Common myeloid progenitor, CD34-positive (primary cell): ENCODE measurements at regions of chr22 and their contacts with region 1.

Region 1: DNA sequence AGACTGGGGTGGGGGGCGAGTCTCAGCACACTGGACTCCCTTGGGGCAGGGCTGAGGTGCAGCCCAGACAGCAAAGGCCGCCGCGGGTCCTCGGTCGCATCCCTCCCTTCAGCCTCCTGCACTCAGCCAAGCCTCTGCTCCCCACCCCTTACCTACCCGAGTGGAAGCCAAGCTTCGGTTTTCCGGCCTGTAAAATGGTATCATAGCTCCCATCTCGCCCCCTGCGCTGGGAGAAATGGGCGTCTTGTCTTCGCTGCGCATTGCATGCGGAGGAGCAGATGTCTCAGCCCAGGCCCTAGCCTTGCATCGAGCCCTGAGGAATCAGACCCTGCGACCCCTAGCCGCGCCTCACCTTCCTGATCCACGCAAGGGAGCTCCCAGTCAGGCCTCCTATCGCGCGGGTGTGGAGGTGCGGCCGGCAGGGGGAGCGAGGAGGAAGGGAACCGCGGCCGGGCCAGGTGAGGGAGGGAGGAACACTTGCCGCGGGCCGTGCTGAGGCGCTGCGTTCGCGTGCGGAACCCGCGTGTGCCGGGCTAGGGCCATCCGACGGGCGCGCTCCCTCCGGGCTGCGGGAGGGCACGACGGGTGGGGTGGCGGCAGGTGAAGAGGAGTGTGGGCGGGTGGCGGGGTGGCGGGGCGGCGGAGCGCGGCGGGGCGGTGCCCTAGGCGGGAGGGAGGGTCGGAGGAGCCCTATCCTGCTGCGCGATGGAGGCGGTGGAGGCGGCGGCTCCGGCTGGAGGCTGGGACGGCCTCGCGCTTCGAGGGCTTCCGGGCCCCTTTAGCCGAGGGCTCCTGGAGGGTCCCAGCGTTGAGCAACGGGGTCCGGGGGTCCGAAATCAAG is 4.1 kb upstream of the TBX1 start:
- DNase-seq: peak; percentile 44 to 63 (median 50)
- H3K4me3 ChIP-seq: peak overlapping the region in 5 of 7 experiments; percentile 27 to 66 (median 42)
- H3K27ac ChIP-seq: no peak overlapping the region
- H3K4me1 ChIP-seq: peaks cover 0 to 56% (median 27%) of the 10 kb centered on the region in 4 experiments
- H3K27me3 ChIP-seq: peaks cover 0 to 94% (median 38%) of the 10 kb centered on the region in 5 experiments

Region 2: DNA sequence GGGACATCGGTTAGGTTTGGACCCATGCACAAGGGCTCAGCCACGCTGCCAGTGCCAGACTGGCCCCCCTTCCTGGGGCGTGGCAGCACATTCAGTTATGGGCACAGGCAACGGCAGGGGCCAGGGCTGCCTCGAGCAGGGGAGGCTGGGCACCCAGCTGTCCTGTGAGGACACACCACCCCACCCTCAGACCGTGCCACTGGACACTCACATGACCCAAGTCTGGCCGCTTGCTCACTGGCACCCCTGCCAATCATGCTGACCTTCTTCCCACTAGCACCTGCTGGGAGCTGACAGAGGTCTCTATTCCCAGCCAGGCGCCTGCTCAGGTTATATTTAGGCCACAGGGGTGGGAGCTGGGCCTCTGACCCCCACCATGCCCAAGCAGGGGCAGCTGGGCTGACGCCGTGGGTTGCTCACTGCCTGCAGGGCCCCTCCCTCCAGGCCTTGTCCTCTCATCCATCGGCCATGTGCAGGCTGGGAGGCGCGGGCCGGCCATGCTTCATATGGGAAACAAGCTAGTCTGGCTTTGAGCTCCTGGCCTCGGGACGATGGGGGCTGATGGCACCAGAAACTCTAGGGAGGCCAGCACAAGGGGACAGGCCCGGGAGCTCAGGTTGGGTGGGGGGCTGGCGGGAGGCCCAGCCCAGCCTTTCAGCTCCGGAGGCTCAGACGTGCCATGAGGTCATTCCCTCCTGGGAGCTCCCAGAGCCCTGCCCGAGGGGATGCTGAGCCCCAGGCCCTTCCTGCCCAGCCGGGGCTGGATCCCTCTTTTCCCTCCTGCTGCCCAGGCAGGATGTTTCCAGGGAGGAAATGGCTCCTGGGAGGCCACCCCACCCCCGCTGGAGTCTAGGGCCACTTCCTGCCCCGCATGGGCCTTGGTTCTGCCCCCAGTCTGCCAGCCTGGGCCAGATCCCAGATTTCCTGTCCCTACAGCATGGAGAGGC is 11.1 kb before region 1 on chr22:
- CTCF ChIA-PET with region 1: interaction called, 20 read pairs
- POLR2A ChIA-PET with region 1: no interaction called
- DNase-seq: no peak
- H3K4me3 ChIP-seq: no peak overlapping the region
- H3K27ac ChIP-seq: no peak overlapping the region
- H3K4me1 ChIP-seq: no peaks in the 10 kb centered on the region
- H3K27me3 ChIP-seq: peaks cover 0 to 3% (median 0%) of the 10 kb centered on the region in 5 experiments

Region 3: GRCh38 chr22:19772422-19773324 is 16.2 kb after region 1 on chr22:
- CTCF ChIA-PET with region 1: interaction called, 12 read pairs
- POLR2A ChIA-PET with region 1: no interaction called
- DNase-seq: peak; percentile 57 to 89 (median 85)
- H3K4me3 ChIP-seq: peak overlapping the region in 3 of 7 experiments; percentile 35 to 53 (median 41)
- H3K27ac ChIP-seq: peak overlapping the region in 1 of 2 experiments; percentile 30
- H3K4me1 ChIP-seq: peaks cover 0 to 37% (median 31%) of the 10 kb centered on the region in 4 experiments
- H3K27me3 ChIP-seq: peaks cover 0 to 30% (median 16%) of the 10 kb centered on the region in 5 experiments